ENCODE measurements at regions of chr5 and their contacts with region 1.

Region 1: DNA sequence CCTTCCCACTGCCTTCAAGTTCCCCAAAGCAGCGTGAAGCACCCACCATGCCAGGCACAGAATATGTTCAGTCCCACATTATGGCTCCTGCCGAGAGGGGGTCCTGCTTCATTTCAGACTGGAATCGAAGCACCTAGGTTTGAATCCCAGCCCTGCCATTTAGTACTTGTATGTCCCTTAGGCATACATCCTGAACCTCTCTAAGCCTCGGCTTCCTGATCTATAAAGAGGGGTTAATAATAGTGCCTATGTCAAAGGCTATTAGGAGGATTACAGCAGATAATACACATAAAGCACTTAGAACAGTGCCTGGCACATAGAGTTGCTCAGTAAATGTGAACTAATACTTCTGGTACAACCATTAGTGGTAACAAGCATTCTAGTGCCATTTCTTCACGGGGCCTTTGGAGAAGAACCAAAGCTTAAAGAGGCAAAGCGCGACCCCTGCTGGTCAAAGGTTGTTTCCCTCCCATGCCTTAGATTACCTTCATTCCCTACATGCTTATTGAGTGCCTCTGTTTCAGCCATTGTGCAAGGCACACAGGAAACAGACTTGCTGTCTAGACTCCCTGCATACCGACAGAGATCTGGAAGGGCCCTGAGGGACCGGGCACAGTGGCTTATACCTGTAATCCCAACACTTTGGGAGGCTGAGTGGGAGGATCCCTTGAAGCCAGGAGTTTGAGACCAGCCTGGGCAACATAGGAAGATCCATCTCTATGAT is 98.2 kb downstream of the PPARGC1B start:
- DNase-seq: peak; percentile 88
- H3K4me3 ChIP-seq: no peak overlapping the region
- H3K27ac ChIP-seq: no peak overlapping the region
- H3K4me1 ChIP-seq: no peaks in the 10 kb centered on the region
- H3K27me3 ChIP-seq: no peaks in the 10 kb centered on the region
- CTCF ChIP-seq: peak; percentile 78 to 92

Region 2: DNA sequence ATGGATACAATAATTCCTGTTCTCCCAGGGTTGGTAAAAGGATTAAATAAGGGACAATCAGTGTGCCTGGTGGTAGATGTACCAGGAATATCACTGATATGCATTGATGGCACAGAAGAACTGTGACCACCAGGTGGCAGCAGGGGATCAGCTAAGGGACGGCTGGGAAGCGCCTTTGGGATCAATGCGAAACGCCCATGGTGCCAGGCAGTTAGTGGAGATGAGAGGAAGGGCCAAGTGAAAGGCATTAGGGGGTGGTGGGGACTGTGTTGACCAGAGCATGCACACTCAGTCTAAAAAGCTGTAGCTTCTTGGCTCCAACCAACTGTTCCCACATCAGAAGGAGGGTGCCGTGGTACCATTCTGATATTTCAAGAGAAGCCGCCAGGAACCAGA is 191.5 kb before region 1 on chr5:
- intact Hi-C with region 1: loop called (anchors 1 kb)
- DNase-seq: peak; percentile 58 to 84
- H3K4me3 ChIP-seq: no peak overlapping the region
- H3K27ac ChIP-seq: no peak overlapping the region
- H3K4me1 ChIP-seq: peaks cover 0 to 8% (median 3%) of the 10 kb centered on the region in 4 donors
- H3K27me3 ChIP-seq: no peaks in the 10 kb centered on the region
- CTCF ChIP-seq: peak; percentile 83 to 90

Region 3: GRCh38 chr5:149731639-149732323 is 96.5 kb before region 1 on chr5:
- intact Hi-C with region 1: loop called (anchors 5 kb)
- DNase-seq: peak; percentile 90 to 91
- H3K4me3 ChIP-seq: peak overlapping the region; percentile 63 to 91
- H3K27ac ChIP-seq: peak overlapping the region; percentile 63 to 66
- H3K4me1 ChIP-seq: peaks cover 0 to 19% (median 12%) of the 10 kb centered on the region in 4 donors
- H3K27me3 ChIP-seq: no peaks in the 10 kb centered on the region
- CTCF ChIP-seq: peak in 1 of 2 experiments; percentile 19

Measured in tibial artery (tissue), 4 donors.